ENCODE measurements at regions of chr3 and their contacts with region 1.

Region 1: GRCh38 chr3:50568947-50569749 is at the start of gene HEMK1:
- DNase-seq: peak; percentile 54
- H3K4me3 ChIP-seq: peak within 1 kb of the TSS; percentile 97
- CTCF ChIP-seq: no peak

Region 2: DNA sequence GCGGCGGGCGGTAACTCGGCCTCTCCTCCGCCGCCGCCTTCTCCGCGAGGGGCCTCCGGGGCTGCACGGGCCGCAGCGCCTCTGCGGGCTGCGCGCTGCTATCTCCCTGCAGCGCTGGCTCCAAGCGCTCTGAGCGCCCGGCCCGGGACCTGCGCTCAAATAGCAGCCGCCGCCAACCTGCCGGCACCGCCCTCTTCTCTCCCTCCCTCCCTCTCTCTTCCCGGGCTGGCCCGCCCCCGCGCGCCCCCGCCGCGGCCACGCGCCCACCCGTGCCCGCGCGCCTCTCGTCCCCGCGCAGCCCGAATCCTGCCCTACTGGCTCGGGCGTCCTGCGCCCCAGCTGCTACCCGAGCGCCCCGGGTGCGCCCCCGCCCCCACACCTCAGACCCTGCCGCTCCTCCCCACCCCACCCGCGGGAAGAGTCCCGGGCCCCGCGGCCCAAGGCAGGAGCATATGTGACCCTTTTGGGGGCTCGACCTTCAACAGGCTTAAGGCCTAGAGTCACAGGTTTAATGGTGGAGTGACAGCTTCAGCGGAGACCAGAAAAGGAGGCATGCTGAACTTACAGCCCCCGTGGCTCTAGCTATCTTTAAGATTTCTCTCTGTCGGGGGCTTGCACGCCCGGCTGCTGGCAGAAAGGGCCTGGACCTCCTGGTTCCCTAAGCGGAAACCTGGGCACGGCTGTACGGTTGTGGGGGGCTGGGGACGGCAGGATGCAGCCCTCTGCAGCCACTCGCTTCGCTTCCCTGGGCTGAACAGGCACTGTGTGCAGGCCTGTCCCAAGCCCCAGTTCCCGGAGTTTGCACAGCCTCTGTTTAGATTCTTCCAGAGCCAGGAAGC is 65.4 kb before region 1 on chr3 and contains the start of gene CACNA2D2:
- CTCF ChIA-PET with region 1: no interaction called
- POLR2A ChIA-PET with region 1: no interaction called
- DNase-seq: no peak
- H3K4me3 ChIP-seq: no peak within 1 kb of the TSS
- CTCF ChIP-seq: no peak

Region 3: DNA sequence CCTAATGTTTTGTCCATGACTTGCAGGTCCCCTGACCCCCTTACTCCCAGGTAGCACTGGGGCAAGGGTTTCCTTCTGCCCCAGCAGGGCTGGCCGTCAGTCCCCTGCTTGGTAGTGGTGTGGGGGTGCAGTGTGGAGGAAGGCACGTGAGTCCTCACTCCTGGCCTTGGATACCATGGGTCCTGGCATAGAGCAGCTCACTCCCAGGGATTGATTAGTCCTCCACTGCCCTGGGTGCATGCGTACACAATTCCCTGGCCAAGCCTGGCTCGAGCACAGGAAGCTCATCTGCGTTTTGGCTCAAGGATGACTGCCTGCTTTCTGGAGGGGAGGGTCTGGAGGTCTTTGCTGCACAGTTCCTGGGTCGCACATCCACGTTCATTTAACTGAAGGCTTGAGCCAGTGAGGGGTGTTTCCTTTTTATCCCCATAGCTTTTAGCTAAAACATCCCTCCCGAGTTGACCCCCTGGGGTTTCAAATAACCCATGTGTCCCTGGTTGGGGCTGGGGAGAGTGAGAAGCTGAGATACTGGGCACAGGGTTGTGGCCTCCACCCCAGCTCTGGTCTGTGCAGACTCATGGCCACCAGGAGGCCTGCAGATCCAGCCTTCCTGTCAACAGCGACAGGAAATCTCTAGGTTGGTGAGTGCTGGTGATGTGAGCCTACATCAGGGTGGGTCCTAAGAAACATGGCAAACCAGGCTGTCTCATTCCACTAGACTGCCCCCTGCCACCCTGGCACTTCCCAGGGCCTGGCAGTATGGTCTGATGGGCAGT is 11.7 kb after region 1 on chr3:
- CTCF ChIA-PET with region 1: interaction called, 138 read pairs
- POLR2A ChIA-PET with region 1: interaction called, 4 read pairs
- DNase-seq: no peak
- H3K4me3 ChIP-seq: no peak overlapping the region
- CTCF ChIP-seq: no peak

Region 4: DNA sequence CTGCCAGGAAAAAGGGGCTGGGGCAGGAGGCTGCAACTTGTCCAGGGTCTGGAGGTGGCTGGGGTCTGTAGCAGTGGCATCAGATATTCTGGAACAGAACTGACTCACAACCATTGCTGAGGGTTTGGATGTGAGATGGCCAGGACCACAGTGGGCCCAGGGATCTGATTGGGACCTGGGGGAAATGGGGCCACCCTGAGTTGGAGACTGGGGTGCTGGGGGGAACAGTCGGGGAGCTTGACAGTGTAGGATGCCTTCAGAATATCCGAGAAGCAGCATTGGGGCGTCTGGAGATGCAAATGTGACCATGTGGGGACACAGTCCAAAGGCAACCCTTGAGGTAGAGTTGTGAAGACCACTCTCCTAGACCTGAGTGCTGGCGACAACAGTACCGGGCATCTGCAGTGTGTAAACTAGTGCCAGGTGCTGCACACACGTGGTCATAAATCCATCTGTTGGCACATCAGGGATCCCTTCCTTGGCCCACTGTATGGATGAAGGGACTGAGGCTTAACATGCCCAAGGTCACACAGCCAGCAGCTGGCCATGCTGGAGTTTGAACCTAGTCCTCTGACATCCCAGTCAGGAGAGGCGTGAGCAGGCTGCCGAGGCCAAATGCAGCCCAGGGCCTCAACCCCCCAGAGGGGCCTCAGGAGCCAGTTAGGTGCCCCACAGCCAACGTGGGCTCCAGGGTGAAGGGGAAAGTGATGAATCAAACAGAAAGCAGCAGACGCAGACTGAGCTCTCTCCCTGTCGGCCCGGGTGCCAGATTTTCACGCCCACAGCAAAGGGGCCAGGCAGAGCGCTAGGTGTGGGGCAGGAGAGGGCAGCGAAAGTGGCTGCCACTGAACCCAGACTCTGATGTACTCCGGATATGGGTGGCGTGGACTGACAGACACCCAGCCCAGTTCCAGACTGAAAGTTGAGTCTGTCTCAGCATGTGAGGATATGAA is 18.9 kb after region 1 on chr3:
- CTCF ChIA-PET with region 1: interaction called, 138 read pairs
- POLR2A ChIA-PET with region 1: interaction called, 9 read pairs
- DNase-seq: no peak
- H3K4me3 ChIP-seq: no peak overlapping the region
- CTCF ChIP-seq: no peak

Region 5: DNA sequence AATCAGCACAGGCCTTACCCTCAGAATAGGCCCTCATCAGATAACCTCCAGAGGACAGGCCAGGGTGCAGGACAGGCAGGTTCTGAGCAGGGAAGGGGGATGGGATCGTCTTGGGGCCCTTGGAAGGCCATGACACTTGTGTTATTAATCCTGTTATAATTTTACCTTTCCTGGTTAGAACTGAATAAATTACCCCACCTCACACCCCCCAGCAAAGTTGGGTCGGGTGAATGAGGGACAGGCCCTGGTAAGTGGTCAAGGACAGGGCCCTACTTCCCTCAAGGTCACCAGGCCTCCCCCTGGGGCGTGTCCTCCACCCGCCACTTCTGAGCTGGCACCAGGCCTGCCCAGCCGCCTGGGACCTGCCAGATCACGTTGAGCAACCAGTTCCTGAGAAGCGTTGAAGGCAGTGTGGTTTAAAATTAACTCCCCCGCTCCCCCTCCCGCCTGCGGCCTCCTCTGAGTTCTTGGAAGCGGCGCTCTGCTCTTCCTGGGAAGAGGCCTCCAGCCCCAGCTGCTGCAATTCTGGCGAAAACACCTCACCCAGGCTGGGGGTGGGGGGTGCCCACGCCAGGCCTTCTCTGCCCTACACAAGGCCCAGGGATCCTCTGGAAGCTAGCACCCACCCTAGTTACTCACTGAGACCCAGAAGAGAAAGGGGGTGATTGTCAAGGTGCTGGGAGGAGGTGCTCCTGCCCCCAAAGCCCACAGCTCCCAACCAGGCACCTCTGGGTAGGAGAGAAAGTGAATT is 31.9 kb after region 1 on chr3:
- CTCF ChIA-PET with region 1: interaction called, 111 read pairs
- POLR2A ChIA-PET with region 1: interaction called, 18 read pairs
- DNase-seq: peak; percentile 94
- H3K4me3 ChIP-seq: peak overlapping the region; percentile 30
- CTCF ChIP-seq: no peak

Region 6: GRCh38 chr3:50995085-50995824 is 426.1 kb after region 1 on chr3:
- CTCF ChIA-PET with region 1: no interaction called
- POLR2A ChIA-PET with region 1: no interaction called
- DNase-seq: no peak
- H3K4me3 ChIP-seq: no peak overlapping the region
- CTCF ChIP-seq: no peak

Measured in AG04449 (cell line).